GM23248 (cell line): ENCODE measurements at regions of chr9 and their contacts with region 1.

Region 1: DNA sequence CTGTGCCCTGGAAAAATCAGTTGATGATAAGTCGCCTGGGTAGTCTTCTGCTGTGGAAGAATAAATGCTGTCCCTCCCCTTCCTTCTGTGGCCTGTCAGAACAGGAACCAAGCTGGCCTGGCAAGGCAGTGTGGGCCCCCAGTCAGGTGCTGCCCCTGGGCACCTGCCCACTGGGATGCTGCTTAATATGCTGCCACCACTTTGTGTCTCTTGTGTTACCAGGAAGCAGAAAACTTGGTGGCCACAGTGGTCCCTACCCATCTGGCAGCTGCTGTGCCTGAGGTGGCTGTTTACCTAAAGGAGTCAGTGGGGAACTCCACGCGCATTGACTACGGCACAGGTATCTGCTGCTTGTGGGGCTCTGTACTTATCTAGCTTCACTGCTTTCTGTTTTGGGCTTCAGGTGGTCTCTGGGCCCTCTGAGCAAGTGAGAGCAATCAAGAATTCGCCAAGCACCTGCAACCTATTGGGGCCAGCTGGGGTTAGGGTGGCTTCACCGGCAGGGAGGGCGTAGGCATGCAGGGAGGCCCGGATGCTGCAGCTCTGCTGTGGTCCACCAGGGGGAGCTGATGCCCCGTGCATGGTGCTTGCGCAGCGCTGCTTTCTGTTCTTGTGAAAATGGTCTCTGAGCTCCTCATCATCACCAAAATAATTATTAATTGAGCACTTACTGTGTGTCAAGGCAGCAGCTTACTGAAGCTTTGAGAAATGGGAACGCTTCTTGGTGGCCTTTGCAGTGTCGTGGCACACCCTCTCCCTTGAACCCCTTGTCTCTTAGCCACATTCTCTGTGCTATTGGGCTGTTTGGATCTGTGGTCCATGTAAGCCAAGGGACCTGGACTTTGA is 20.3 kb downstream of the PTPA start:
- DNase-seq: peak; percentile 77
- H3K4me3 ChIP-seq: no peak overlapping the region
- H3K27ac ChIP-seq: no peak overlapping the region
- H3K4me1 ChIP-seq: no peaks in the 10 kb centered on the region
- H3K27me3 ChIP-seq: no peaks in the 10 kb centered on the region

Region 2: GRCh38 chr9:129617167-129617566 is 485.6 kb after region 1 on chr9:
- in situ Hi-C with region 1: loop called (anchors 5 kb)
- DNase-seq: peak; percentile 88
- H3K4me3 ChIP-seq: no peak overlapping the region
- H3K27ac ChIP-seq: peak overlapping the region; percentile 25
- H3K4me1 ChIP-seq: peaks cover 20% of the 10 kb centered on the region
- H3K27me3 ChIP-seq: no peaks in the 10 kb centered on the region